Sigmoid colon (tissue), 7 donors: ENCODE measurements at regions of chr1 and their contacts with region 1.

Region 1: GRCh38 chr1:51296383-51297357 is 33.7 kb downstream of the TTC39A start:
- DNase-seq: peak; percentile 87
- H3K4me3 ChIP-seq: peak overlapping the region; percentile 34 to 56 (median 52)
- H3K27ac ChIP-seq: peak overlapping the region in 2 of 4 donors; percentile 7 to 34
- H3K4me1 ChIP-seq: peaks cover 0 to 12% (median 9%) of the 10 kb centered on the region in 4 donors
- H3K27me3 ChIP-seq: peaks cover 0 to 7% (median 0%) of the 10 kb centered on the region in 3 donors
- CTCF ChIP-seq: peak; percentile 70 to 97 (median 92)
- EP300 ChIP-seq: no peak
- POLR2A ChIP-seq: no peak

Region 2: GRCh38 chr1:50774759-50775351 is 521.8 kb before region 1 on chr1:
- intact Hi-C with region 1: loop called (anchors 5 kb)
- DNase-seq: no peak
- H3K4me3 ChIP-seq: no peak overlapping the region
- H3K27ac ChIP-seq: no peak overlapping the region
- H3K4me1 ChIP-seq: no peaks in the 10 kb centered on the region
- H3K27me3 ChIP-seq: no peaks in the 10 kb centered on the region
- CTCF ChIP-seq: peak; percentile 22 to 74 (median 63)
- EP300 ChIP-seq: no peak
- POLR2A ChIP-seq: no peak

Region 3: DNA sequence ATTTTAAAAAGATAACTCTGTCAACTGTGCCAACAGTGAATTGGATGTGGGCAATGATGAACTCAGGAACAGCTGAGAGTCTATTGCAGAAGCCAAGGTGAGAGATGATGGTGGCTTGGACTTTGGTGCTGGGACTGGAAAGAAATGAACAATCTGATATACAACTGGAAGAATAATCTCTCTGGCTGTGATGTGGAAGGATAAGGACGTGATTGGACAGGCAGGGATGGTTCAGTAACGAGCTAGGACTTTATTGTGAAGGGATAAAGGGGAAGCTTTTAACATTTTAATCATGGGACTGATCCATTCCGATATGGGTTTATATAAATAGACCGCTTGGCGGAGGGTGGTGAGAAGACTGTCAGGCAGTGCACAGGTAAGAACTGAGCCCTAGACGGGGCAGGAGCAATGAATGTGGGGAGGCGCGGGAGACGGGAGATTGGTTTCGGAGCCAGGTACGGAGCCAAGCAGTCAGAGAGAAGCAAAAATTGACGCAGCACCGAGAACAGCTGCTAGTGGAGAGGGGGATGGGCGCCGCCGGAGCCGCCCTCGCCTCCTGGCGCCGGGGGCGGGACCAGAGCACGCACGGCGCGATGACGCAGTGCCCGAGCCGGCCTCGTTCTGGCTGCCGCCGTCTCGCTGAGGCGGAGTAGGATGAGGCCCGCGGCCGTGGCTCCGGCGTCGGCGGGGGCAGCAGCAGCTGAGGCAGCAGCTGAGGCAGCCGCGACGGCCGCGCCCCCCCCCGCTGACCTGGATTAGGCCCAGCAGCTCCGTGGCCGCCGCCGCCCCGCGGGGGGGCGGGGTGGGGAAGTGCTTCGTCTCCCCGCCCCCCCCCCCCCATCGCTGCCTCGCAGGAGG is 60.8 kb before region 1 on chr1 and contains the start of gene RNF11:
- intact Hi-C with region 1: loop called (anchors 5 kb)
- DNase-seq: peak; percentile 97
- H3K4me3 ChIP-seq: peak within 1 kb of the TSS; percentile 76 to 100 (median 88)
- H3K27ac ChIP-seq: peak within 1 kb of the TSS; percentile 93 to 98 (median 96)
- H3K4me1 ChIP-seq: peaks cover 0 to 43% (median 40%) of the 10 kb centered on the region in 4 donors
- H3K27me3 ChIP-seq: no peaks in the 10 kb centered on the region
- CTCF ChIP-seq: no peak
- EP300 ChIP-seq: peak in 2 of 4 donors; percentile 7 to 47
- POLR2A ChIP-seq: peak; percentile 72 to 75
- total RNA-seq, gene RNF11: 85.8 to 116 (median 101) TPM

Region 4: GRCh38 chr1:51331206-51332100 is 34.8 kb after region 1 on chr1:
- intact Hi-C with region 1: no loop called
- DNase-seq: no peak
- H3K4me3 ChIP-seq: peak overlapping the region in 1 of 4 donors; percentile 54
- H3K27ac ChIP-seq: no peak overlapping the region
- H3K4me1 ChIP-seq: peaks cover 0 to 14% (median 10%) of the 10 kb centered on the region in 4 donors
- H3K27me3 ChIP-seq: peaks cover 0 to 15% (median 7%) of the 10 kb centered on the region in 3 donors
- CTCF ChIP-seq: no peak
- EP300 ChIP-seq: no peak
- POLR2A ChIP-seq: no peak